Endothelial cell of umbilical vein (primary cell): ENCODE measurements at regions of chr16 and their contacts with region 1.

Region 1: DNA sequence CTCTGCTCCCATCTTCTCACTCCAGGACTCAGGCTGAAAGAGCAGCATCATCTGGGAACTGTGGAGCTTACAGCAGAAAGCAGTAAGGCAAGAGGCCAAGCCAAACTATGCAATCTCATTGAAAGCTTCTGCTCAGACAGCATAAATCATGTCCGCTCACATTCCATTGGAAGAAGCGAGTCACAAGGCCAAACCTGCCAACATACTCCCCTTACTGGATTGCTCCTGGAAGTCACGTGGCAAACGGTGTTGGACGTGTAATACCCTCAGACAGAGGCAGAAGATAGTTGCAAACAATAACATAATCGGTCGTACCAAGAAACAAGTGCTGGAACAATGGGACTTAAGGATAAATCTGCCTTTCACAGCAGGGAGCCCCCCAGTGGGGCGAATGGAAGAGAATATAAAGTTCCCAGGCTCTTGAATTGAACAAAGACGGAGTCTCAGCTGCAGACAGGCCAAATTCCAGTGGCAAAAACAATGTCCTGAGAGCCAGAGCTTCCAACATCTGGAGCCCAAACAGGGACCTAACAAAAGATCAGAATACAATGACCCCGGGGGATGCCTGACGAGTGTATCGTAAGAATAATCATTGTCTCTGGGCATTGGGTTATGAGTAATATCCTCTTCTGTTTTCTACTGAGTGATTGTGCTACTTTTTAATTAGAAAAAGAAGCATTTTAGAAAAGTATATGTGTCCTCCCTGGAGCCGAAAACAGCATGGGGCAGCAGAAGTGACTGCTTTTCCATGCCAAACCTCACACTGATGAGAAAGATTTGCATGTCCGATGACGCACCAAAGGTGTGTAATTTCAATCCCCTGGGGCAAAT is 68.4 kb downstream of the CMC2 start:
- DNase-seq: peak; percentile 98
- H3K4me3 ChIP-seq: peak overlapping the region in 2 of 3 experiments; percentile 16 to 27
- H3K27ac ChIP-seq: peak overlapping the region; percentile 98
- H3K4me1 ChIP-seq: peaks cover 45% of the 10 kb centered on the region
- H3K27me3 ChIP-seq: no peaks in the 10 kb centered on the region
- CTCF ChIP-seq: no peak
- POLR2A ChIP-seq: peak; percentile 86

Region 2: GRCh38 chr16:80862160-80862705 is 76.0 kb before region 1 on chr16:
- CTCF ChIA-PET with region 1: no interaction called
- POLR2A ChIA-PET with region 1: no interaction called
- dilution Hi-C with region 1: no loop called
- intact Hi-C with region 1: no loop called
- DNase-seq: no peak
- H3K4me3 ChIP-seq: no peak overlapping the region
- H3K27ac ChIP-seq: no peak overlapping the region
- H3K4me1 ChIP-seq: no peaks in the 10 kb centered on the region
- H3K27me3 ChIP-seq: peaks cover 0 to 6% of the 10 kb centered on the region in 2 experiments
- CTCF ChIP-seq: no peak
- POLR2A ChIP-seq: no peak

Region 3: DNA sequence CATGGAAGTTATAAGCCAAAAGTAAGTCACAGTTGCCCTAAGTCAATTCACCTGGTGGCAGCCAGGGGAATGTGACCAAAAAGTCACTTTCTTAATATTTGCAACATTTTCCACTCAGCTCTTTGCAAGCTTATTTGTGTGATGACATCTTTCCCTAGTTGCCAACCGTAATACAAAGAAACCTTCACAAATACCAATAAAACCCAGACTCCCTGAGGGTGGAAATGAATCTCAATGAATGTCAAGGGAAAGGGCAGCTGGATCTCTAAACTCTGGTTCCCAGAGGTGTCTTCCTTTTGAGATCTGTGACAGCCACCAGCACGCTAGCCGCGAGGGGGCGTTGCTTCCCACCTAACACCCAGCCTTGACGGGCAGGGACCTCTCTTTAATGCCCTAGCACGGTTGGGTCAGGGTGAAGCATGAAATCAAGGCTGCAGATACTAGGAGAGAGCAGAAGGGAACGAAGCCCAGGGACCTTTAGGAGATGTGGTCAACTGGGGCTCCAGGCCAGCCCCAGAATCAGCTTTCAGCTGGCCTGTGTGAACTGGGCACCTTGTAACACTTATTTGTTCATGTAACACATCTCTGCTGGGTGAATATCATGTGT is 13.8 kb before region 1 on chr16:
- CTCF ChIA-PET with region 1: interaction called, 14 read pairs
- POLR2A ChIA-PET with region 1: no interaction called
- dilution Hi-C with region 1: no loop called
- intact Hi-C with region 1: loop called (anchors 1 kb)
- DNase-seq: peak; percentile 80
- H3K4me3 ChIP-seq: no peak overlapping the region
- H3K27ac ChIP-seq: no peak overlapping the region
- H3K4me1 ChIP-seq: no peaks in the 10 kb centered on the region
- H3K27me3 ChIP-seq: no peaks in the 10 kb centered on the region
- CTCF ChIP-seq: peak; percentile 88 to 95
- POLR2A ChIP-seq: no peak

Region 4: DNA sequence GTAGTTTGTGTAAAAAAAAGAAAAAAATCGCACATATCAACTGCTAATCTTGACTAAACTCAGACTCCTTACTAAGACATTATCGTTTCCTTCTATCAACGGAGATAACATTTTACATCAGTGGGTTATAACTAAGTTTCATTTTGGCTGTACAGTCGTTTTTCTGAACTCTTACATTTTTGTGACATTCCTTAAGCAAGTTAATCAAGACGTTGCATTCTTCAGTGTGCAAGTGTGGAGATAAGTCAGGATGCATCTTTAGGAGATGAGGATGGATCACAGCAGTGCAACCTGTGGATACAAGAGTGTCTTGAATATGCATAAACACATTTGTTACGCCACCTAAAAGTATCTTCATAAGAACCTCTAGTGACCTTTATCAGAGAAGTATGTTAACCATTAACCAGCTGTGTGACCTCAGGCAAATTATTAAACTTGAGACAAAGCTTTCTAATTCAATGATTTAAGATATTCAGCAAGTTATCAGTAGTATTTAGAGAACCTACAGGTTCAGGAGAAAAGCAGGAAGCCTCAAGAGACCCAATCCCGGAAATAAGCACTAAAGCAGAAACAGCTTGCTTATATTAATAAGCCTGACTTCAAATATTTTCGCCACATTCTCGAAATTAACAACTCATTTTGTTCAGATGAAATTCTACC is 59.0 kb after region 1 on chr16:
- CTCF ChIA-PET with region 1: interaction called, 4 read pairs
- POLR2A ChIA-PET with region 1: interaction called, 6 read pairs
- dilution Hi-C with region 1: no loop called
- intact Hi-C with region 1: loop called (anchors 1 kb)
- DNase-seq: peak; percentile 54
- H3K4me3 ChIP-seq: peak overlapping the region; percentile 10 to 51 (median 10)
- H3K27ac ChIP-seq: peak overlapping the region; percentile 51
- H3K4me1 ChIP-seq: peaks cover 31% of the 10 kb centered on the region
- H3K27me3 ChIP-seq: no peaks in the 10 kb centered on the region
- CTCF ChIP-seq: no peak
- POLR2A ChIP-seq: no peak

Region 5: DNA sequence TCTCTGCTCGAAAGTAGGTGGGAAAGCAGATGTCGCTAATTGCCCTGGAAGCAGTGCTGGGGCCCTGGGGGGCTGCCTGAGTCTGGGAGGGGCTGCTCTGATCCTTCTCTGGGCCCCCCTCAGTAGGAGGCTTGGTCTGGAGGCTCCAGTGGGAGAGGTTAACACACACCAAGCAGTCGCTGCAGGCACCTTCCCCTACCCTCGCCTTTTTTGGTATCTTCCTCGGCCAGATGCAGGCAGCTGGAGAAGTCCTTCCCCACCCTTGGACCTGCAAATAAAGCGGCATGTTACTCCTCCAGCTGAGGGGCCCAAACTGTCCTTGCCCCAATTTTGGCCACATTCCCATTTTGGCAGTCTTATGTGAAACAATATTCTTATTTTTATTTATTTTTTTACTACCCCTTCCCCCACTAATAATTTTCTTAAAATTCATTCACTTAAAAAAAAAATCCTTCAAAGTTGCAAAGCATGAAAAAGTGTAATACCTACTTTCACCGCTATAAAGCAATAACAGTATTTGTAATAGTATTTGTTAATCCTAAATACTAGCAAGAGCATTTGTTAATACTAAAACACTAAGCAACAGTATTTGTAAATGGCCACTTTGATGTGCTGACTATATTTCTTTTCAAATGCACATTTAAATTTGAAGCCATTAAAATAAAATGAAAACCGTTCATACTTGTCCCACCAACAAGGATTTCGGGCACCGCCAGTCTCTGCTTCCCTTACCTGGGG is 123.8 kb after region 1 on chr16:
- CTCF ChIA-PET with region 1: no interaction called
- POLR2A ChIA-PET with region 1: no interaction called
- dilution Hi-C with region 1: no loop called
- intact Hi-C with region 1: no loop called
- DNase-seq: no peak
- H3K4me3 ChIP-seq: no peak overlapping the region
- H3K27ac ChIP-seq: no peak overlapping the region
- H3K4me1 ChIP-seq: no peaks in the 10 kb centered on the region
- H3K27me3 ChIP-seq: no peaks in the 10 kb centered on the region
- CTCF ChIP-seq: no peak
- POLR2A ChIP-seq: no peak

Region 6: DNA sequence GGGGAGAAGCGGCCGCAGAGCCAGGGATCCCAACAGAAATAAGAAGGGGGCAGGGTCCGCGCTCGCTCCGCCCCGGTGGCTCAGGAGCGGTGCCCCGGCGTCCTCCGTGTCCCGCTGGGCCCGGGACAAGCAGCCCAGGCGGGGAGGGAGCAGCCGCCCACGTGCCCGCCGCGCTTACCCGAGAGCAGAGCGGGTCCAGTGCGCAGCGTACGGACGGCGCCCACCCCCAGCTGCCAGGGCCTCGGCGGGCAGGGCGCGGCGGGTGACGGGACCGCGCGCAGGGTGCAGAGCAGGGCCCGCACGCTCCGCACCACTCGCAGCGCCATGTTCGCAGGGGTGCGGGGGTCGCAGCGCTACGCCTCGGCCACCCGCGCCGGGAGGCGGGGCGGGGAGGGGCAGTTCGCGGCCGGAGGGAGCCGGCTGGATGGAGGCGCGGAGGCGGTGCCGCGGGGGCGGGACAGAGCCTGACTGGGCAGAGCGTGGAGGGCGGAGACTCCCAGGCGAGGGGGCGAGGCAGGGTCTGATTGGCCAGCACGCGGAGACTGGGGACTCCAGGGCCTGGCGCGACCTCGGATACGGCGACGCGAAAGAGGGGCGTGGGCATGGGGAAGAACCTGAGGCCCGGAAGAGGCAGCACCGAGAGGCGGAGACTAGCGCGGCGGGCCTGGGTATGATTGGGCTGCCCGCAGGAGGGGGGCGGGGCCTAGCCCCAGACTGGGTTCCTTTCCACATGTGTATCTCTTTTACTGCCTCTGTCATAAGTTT is 157.9 kb after region 1 on chr16 and contains the start of gene GCSH:
- CTCF ChIA-PET with region 1: no interaction called
- POLR2A ChIA-PET with region 1: no interaction called
- dilution Hi-C with region 1: no loop called
- intact Hi-C with region 1: loop called (anchors 5 kb)
- DNase-seq: peak; percentile 99
- H3K4me3 ChIP-seq: peak within 1 kb of the TSS; percentile 49 to 80 (median 60)
- H3K27ac ChIP-seq: peak within 1 kb of the TSS; percentile 0
- H3K4me1 ChIP-seq: peaks cover 7% of the 10 kb centered on the region
- H3K27me3 ChIP-seq: peaks cover 0 to 4% of the 10 kb centered on the region in 2 experiments
- CTCF ChIP-seq: no peak
- POLR2A ChIP-seq: peak; percentile 57
- total RNA-seq, gene GCSH: 31.1 and 33.1 TPM in 2 replicates